Panc1 (cell line): ENCODE measurements at regions of chr1 and their contacts with region 1.

Region 1: DNA sequence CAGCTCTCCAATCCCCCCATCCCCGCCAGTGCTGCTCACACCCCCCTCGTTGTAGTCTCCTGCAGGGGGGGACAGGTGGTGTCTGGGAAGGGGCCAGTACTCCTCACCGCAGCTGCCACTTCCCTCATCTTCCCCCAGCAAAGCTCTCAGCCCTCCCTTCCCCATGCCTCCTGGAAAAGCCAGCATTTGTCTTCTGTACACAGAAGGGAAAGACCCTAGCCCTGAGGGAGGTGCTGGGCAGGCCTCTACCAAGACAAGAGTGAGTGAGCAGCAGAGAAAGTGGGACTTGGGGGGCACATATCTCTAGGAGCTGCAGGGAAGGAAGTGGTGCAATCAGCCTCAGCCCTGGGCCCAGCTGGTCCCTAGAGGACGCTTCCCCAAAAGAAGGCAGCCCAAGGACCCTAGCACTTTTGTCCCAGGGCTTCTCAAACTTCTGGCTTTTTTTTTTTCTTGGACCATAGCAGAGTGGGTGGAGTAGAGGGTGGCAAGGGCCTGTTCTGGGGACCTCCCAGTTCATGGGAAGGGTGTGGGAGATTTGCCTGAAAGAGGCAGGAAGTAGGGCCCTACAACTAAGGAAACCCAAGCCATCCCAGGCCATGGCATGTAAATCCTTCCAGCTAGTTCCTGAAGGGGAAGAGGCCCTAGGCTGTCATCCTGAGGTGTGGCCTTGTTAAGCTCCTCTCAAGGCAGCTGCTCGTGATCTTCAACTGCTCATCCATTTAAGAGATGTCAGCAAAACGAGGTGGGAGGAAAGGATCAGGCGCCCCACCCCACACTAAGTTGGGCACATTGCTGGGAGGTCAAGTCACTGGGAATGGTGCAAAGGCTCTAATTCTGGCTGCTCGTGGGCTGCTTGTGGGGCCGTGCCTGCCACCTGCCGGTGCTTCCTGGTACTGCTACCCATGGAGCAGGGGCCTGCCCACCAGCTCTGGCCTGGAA is 12.6 kb downstream of the ZC3H12A start:
- DNase-seq: no peak
- ATAC-seq: peak; percentile 83
- H3K4me3 ChIP-seq: no peak overlapping the region
- H3K27ac ChIP-seq: no peak overlapping the region
- H3K4me1 ChIP-seq: 0 out of 2 replicates have a peak, but pooled peaks cover 2% of the 10 kb centered on the region
- H3K27me3 ChIP-seq: no peaks in the 10 kb centered on the region
- CTCF ChIP-seq: peak; percentile 98

Region 2: GRCh38 chr1:37449936-37450335 is 37.0 kb before region 1 on chr1:
- CTCF ChIA-PET with region 1: interaction called, 16 read pairs
- POLR2A ChIA-PET with region 1: no interaction called
- in situ Hi-C with region 1: no loop called
- intact Hi-C with region 1: loop called (anchors 1 kb)
- DNase-seq: no peak
- ATAC-seq: no peak
- H3K4me3 ChIP-seq: no peak overlapping the region
- H3K27ac ChIP-seq: no peak overlapping the region
- H3K4me1 ChIP-seq: peaks cover 1% of the 10 kb centered on the region; the same call in 1 of the 2 replicates
- H3K27me3 ChIP-seq: no peaks in the 10 kb centered on the region; the same call in 1 of the 2 replicates
- CTCF ChIP-seq: no peak

Region 3: DNA sequence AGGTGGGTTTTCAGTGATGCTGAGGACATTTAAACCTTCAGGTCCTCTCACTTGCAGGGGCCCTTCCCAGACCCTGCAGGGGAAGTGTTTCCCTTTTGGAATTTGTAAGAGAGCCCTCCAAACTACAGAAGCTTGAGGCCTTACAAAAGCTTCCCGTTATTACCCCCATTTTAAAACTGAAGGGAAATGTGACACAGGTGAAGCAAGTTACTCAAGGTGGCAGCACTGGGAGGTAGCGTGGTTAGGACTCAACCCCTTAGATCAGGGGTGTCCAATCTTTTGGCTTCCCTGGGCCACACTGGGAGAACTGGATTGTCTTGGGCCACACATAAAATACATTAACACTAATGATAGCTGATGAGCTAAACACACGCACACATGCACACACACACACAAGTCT is 28.4 kb before region 1 on chr1:
- CTCF ChIA-PET with region 1: interaction called, 16 read pairs
- POLR2A ChIA-PET with region 1: no interaction called
- in situ Hi-C with region 1: no loop called
- intact Hi-C with region 1: loop called (anchors 1 kb)
- DNase-seq: no peak
- ATAC-seq: no peak
- H3K4me3 ChIP-seq: no peak overlapping the region
- H3K27ac ChIP-seq: no peak overlapping the region
- H3K4me1 ChIP-seq: peaks cover 4% of the 10 kb centered on the region; the same call in 1 of the 2 replicates
- H3K27me3 ChIP-seq: no peaks in the 10 kb centered on the region
- CTCF ChIP-seq: no peak

Region 4: DNA sequence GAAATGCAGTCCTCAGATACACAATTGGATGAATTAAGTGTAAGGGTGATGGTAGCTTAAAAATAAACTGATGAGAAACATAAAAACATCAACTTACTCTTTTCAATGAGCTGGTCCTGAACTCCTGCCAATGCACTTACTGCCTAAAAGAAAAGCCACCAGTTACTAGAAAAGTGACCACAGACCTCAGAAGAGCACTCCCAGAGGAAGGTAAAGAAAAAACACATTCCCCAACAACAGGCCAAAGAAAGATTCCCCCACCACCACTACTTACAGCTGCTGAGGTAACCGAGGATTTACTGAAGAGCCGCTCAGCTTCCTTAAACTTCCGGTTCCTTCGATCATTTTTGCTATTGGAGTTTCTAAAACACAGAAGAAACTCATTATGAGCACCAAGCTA is 22.2 kb after region 1 on chr1:
- CTCF ChIA-PET with region 1: interaction called, 13 read pairs
- POLR2A ChIA-PET with region 1: no interaction called
- in situ Hi-C with region 1: no loop called
- intact Hi-C with region 1: no loop called
- DNase-seq: no peak
- ATAC-seq: peak; percentile 75; the same call in 1 of the 2 replicates
- H3K4me3 ChIP-seq: no peak overlapping the region
- H3K27ac ChIP-seq: no peak overlapping the region
- H3K4me1 ChIP-seq: peaks cover 7% of the 10 kb centered on the region
- H3K27me3 ChIP-seq: no peaks in the 10 kb centered on the region
- CTCF ChIP-seq: peak; percentile 58